PC-3 (cell line): ENCODE measurements at regions of chr1 and their contacts with region 1.

Region 1: DNA sequence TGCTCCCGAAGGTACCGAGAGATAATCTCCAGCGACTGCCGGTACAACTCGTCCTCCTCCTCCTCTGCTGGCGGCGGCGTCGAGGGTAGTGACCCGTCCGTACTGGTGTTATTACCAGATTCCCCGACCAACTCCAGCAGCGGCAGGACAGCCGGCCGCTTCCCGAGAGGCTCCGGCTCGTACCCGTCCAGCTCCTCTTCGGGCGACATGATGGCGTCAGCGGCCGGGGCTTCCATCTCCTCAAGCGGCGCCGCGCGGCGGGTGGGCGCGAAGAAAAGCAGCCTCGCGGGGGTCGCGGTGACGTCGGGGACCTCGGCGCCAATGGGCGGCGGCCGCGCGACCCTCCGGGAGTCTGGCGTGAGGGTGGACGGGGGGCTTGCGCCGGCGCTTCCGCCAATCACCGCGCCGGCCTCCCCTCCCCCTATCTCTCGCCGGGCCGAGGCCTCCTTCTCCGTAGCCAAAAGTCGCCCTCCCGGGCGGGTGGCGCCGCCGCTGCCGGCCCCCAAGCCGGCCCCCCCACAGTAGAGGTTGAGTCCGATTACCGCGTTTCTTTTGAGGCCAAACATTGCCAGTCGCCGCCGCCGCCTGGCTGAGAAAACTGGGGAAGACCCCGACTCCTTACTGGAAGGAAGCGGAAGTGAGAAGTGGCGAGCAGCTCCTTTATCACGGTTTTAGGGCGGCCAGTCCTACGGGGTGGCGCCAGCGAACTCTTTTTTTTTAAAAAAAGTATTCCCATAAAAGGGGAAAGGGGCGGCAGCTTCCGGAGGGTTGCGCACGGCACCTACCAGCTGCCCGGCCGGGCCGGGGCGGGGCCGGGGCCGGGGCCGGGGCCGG is at the start of gene MCL1:
- DNase-seq: peak; percentile 99
- ATAC-seq: peak; percentile 27
- H3K4me3 ChIP-seq: peak within 1 kb of the TSS; percentile 93
- H3K27ac ChIP-seq: peak within 1 kb of the TSS; percentile 89
- H3K4me1 ChIP-seq: peaks cover 26% of the 10 kb centered on the region
- H3K27me3 ChIP-seq: no peaks in the 10 kb centered on the region
- CTCF ChIP-seq: no peak
- total RNA-seq, gene MCL1: 285 and 376 TPM in 2 replicates

Region 2: DNA sequence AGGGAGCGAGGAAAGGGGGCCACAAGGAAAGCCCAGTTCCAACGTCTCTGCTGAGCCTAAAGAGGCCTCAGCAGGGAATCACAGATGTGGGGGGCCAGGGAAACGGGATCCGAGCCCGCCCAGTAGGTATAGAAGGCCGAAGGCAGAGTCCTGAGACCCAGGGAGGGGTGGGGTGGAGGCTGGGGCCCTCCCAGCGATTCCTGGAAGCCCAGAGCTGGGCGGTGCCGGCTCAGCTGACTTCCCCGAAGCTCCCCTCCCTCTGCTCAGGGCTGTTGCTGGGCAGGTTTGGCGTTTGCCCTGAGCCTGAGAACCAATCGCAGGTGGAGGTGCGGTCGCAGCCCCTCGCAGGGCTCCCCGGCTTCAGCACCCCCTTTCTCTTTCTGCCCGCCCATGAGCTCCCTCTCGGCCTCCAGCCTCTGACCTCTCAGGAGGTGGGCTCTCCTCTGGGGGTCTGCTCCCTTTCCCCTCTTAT is 17.2 kb before region 1 on chr1:
- CTCF ChIA-PET with region 1: interaction called, 3 read pairs
- POLR2A ChIA-PET with region 1: interaction called, 31 read pairs
- intact Hi-C with region 1: loop called (anchors 1 kb)
- DNase-seq: peak; percentile 91
- ATAC-seq: peak; percentile 68
- H3K4me3 ChIP-seq: peak overlapping the region; percentile 69
- H3K27ac ChIP-seq: peak overlapping the region; percentile 96
- H3K4me1 ChIP-seq: peaks cover 37% of the 10 kb centered on the region
- H3K27me3 ChIP-seq: no peaks in the 10 kb centered on the region
- CTCF ChIP-seq: no peak

Region 3: GRCh38 chr1:150613061-150613920 is 34.1 kb after region 1 on chr1:
- CTCF ChIA-PET with region 1: interaction called, 4 read pairs
- POLR2A ChIA-PET with region 1: interaction called, 7 read pairs
- intact Hi-C with region 1: loop called (anchors 2 kb)
- DNase-seq: peak; percentile 98
- ATAC-seq: peak; percentile 86
- H3K4me3 ChIP-seq: peak overlapping the region; percentile 20; the same call in 1 of the 2 replicates
- H3K27ac ChIP-seq: peak overlapping the region; percentile 98
- H3K4me1 ChIP-seq: peaks cover 51% of the 10 kb centered on the region
- H3K27me3 ChIP-seq: no peaks in the 10 kb centered on the region
- CTCF ChIP-seq: no peak

Region 4: DNA sequence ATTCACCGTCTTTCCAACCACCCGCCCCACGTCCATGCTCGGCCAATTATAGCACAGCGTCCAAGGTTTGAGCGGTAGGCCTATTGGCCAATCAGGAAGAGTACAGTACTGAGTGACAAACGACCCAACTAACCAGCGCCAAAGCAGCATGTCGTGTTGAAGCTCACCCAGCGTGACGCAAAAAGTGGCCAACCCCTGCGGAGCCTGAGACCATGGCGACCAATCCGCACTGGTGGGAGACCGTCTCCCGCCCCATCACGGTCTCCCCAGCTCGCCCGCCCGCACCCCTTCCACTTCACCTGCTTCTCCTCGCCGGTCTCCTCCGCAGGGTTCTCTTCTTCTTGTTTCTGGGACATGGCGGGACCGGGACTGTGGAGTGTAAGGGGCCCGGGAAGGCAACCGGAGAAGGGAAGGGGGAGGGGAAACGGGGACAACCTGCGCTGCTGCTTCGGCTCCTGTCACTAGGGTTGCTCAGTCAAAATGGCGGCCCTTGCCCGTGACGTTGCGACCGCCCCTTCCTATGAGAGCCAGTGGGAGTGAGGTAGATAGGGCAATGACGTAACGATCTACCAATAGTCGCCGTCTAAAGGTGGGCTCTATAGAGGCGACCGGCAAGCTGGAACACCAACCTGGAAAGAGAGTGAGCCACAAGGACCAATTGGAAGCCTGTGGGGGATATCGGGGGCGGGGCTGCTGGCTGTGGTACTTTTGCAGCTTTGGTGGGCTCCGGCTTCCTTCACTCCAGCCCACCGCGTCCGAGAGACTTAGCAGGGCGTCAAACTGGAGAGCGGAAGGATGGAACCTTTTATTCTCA is 50.1 kb after region 1 on chr1 and contains the start of gene ENSA:
- CTCF ChIA-PET with region 1: interaction called, 5 read pairs
- POLR2A ChIA-PET with region 1: interaction called, 14 read pairs
- intact Hi-C with region 1: no loop called
- DNase-seq: peak; percentile 100
- ATAC-seq: peak; percentile 94
- H3K4me3 ChIP-seq: peak within 1 kb of the TSS; percentile 79
- H3K27ac ChIP-seq: peak within 1 kb of the TSS; percentile 86
- H3K4me1 ChIP-seq: peaks cover 34% of the 10 kb centered on the region
- H3K27me3 ChIP-seq: no peaks in the 10 kb centered on the region
- CTCF ChIP-seq: no peak
- total RNA-seq, gene ENSA: 194 and 232 TPM in 2 replicates

Region 5: DNA sequence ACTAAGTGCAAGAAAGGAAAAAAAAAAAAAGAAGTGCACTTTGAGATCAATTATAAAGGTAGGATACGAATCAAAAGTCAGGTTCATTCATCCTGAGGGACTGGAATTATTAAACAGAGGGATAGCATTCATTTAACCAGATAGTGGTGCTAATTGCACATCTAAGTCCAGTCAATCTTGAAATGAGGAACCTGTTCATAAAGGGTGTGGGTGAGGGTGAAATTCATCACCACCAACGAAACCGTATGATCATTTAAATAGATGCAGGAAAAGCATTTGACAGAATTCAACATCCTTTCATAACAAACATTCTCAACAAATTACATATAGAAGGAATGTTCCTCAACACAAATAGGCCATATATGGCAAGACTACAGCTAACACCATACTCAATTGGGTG is 180.8 kb after region 1 on chr1:
- CTCF ChIA-PET with region 1: no interaction called
- POLR2A ChIA-PET with region 1: no interaction called
- intact Hi-C with region 1: no loop called
- DNase-seq: no peak
- ATAC-seq: no peak
- H3K4me3 ChIP-seq: no peak overlapping the region
- H3K27ac ChIP-seq: no peak overlapping the region
- H3K4me1 ChIP-seq: peaks cover 7% of the 10 kb centered on the region
- H3K27me3 ChIP-seq: no peaks in the 10 kb centered on the region
- CTCF ChIP-seq: no peak

Region 6: DNA sequence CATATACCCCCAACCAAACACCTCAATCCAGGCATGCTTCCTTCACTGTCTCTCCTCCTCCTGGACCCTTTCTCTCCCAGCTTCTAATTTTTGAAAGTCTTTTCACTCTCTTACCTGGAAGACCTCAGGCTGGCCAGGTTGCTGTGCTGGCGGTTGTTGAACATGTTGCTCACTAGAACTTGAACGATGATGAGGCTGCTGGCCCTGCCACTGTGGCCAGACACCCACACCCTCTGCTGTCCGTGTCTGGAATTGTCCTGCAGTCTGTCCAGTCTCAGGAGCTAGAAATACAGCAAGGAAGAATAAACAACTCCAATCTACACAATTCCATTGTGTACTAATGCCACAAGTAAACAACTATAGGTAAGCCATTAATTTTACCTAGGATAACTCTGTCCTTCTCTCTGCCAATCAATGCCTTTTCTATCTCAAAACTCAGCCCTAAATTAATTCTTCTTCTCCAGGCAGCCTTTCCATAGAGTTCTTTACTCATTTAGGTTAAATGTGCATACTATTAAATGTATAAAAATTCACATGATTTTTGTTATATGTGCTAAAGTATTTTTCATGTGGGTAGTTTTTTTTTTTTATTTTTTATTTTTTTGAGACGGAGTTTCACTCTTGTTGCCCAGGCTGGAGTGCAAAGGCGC is 234.0 kb after region 1 on chr1:
- CTCF ChIA-PET with region 1: no interaction called
- POLR2A ChIA-PET with region 1: no interaction called
- intact Hi-C with region 1: loop called (anchors 5 kb)
- DNase-seq: peak; percentile 79
- ATAC-seq: peak; percentile 98
- H3K4me3 ChIP-seq: no peak overlapping the region
- H3K27ac ChIP-seq: no peak overlapping the region
- H3K4me1 ChIP-seq: no peaks in the 10 kb centered on the region
- H3K27me3 ChIP-seq: no peaks in the 10 kb centered on the region
- CTCF ChIP-seq: peak; percentile 96

Region 7: DNA sequence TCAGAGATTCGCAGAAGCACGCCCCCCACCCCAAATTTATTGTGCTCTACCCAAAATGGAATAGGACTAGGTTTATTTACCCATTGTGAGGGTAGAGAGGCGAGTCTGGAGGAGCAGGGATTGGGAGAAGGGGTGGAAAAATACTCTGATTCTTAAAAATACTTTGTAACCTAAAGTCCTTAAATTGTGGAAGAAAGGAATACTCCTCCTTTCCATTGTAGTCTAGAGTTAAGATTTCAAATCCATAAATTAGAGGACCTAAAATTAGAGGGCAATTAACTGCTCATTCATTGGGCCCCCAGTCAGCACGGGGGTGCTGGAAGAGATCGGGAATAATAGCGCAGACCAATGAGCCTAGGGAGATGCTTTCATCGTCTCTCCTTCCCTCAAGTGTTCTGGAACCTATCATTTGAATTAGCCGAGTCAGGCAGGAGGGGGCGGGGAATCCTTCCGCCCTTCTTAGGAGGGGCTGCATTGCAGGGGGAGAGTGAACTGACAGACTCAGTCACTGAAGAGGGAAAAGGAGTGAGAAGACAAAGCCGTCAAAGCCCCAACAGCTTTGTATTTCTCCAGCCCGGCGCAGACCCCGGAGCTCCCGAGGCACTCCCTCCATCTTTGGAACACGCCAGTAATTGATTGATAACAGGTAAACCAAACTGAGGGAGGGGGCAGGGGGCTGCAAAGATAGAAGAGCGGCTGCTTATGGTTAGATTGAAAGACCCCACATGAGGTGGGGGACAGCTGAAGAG is 480.9 kb after region 1 on chr1 and contains the start of gene MLLT11:
- CTCF ChIA-PET with region 1: no interaction called
- POLR2A ChIA-PET with region 1: interaction called, 20 read pairs
- intact Hi-C with region 1: no loop called
- DNase-seq: peak; percentile 66
- ATAC-seq: peak; percentile 53
- H3K4me3 ChIP-seq: peak within 1 kb of the TSS; percentile 99
- H3K27ac ChIP-seq: peak within 1 kb of the TSS; percentile 77
- H3K4me1 ChIP-seq: peaks cover 40% of the 10 kb centered on the region
- H3K27me3 ChIP-seq: no peaks in the 10 kb centered on the region
- CTCF ChIP-seq: peak; percentile 30; the same call in 1 of the 2 replicates
- total RNA-seq, gene MLLT11: 12.3 and 14.1 TPM in 2 replicates